Breast epithelium (tissue), 4 donors: ENCODE measurements at regions of chr12 and their contacts with region 1.

Region 1: DNA sequence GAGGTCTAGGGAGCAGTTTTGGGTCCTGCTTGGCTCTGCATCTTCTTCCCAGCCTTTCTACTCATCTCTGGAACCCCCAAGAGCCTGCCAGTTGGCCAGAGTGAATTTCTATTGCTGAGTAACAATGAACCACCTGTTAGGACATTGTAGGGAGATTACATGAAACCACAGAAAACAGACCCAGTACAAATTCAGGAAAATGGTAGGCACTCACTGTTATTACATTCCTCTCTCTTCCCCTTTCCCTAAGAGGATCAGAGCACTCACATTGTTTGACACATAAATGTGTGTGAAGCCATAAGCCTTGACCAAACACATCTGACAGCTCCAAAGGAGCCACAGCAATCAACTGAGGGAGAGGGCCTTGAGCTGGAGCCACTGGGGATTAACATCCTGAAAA is 216.1 kb downstream of the TMEM132D start:
- DNase-seq: no peak
- H3K4me3 ChIP-seq: no peak overlapping the region
- H3K27ac ChIP-seq: no peak overlapping the region
- H3K4me1 ChIP-seq: no peaks in the 10 kb centered on the region
- H3K27me3 ChIP-seq: no peaks in the 10 kb centered on the region
- CTCF ChIP-seq: no peak
- POLR2A ChIP-seq: no peak

Region 2: GRCh38 chr12:129614221-129614885 is 73.4 kb before region 1 on chr12:
- intact Hi-C with region 1: no loop called
- DNase-seq: no peak
- H3K4me3 ChIP-seq: no peak overlapping the region
- H3K27ac ChIP-seq: no peak overlapping the region
- H3K4me1 ChIP-seq: no peaks in the 10 kb centered on the region
- H3K27me3 ChIP-seq: peaks cover 0 to 4% of the 10 kb centered on the region in 2 donors
- CTCF ChIP-seq: no peak
- POLR2A ChIP-seq: no peak

Region 3: GRCh38 chr12:130517588-130517987 is 829.9 kb after region 1 on chr12:
- intact Hi-C with region 1: loop called (anchors 5 kb)
- DNase-seq: no peak
- H3K4me3 ChIP-seq: no peak overlapping the region
- H3K27ac ChIP-seq: no peak overlapping the region
- H3K4me1 ChIP-seq: no peaks in the 10 kb centered on the region
- H3K27me3 ChIP-seq: no peaks in the 10 kb centered on the region
- CTCF ChIP-seq: no peak
- POLR2A ChIP-seq: no peak